Common myeloid progenitor, CD34-positive (primary cell): ENCODE measurements at regions of chr12 and their contacts with region 1.

Region 1: DNA sequence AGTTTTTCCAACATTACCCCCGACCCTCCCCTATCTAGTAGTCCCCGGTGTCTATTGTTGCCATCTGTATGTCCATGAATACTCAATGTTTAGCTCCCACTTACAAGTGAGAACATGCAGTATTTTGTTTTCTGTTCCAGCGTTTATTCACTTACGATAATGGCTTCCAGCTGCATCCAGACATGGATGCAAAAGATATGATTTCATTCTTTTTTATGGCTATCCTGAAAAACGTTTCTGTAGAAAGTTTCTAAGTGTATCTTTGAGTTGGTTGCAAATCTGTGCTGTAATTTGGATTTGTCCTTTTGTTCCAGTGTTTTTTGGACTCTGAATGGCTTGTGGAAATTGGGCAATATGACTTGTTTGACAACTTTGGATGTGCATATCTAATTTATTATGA is 11.8 kb downstream of the SP1 start:
- DNase-seq: no peak
- H3K4me3 ChIP-seq: no peak overlapping the region
- H3K27ac ChIP-seq: no peak overlapping the region
- H3K4me1 ChIP-seq: peaks cover 7 to 24% (median 16%) of the 10 kb centered on the region in 4 experiments
- H3K27me3 ChIP-seq: no peaks in the 10 kb centered on the region

Region 2: DNA sequence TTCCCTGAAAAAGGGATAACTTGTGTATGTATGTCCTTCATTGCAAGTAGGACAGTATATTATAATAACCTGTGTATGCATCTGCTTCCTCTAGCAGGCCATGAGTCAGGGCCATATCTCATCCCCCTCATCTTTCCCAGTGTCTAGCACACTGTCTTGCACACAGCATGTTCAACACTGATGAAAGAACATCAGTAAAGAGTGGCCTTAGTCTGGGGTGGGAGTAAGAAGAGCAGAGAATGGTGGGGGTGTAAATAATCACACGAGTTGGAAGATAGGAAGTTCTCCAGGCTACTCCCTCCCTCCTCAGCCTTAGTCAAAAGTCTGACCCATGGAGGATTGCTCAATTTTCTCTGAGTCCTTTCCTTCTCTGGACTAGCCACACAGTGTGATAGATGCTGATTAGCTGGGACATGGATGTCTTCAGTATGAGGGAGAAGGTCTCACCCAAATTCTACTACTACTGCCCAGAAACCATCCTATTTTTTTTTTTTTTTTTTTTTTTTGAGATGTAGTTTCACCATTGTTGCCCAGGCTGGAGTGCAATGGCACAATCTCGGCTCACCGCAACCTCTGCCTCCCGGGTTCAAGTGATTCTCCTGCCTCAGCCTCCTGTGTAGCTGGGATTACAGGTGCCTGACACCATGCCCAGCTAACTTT is 26.4 kb before region 1 on chr12:
- CTCF ChIA-PET with region 1: no interaction called
- POLR2A ChIA-PET with region 1: no interaction called
- DNase-seq: peak in 2 of 3 donors; percentile 35 to 53
- H3K4me3 ChIP-seq: no peak overlapping the region
- H3K27ac ChIP-seq: peak overlapping the region in 1 of 2 experiments; percentile 75
- H3K4me1 ChIP-seq: peaks cover 5 to 30% (median 26%) of the 10 kb centered on the region in 4 experiments
- H3K27me3 ChIP-seq: no peaks in the 10 kb centered on the region

Region 3: DNA sequence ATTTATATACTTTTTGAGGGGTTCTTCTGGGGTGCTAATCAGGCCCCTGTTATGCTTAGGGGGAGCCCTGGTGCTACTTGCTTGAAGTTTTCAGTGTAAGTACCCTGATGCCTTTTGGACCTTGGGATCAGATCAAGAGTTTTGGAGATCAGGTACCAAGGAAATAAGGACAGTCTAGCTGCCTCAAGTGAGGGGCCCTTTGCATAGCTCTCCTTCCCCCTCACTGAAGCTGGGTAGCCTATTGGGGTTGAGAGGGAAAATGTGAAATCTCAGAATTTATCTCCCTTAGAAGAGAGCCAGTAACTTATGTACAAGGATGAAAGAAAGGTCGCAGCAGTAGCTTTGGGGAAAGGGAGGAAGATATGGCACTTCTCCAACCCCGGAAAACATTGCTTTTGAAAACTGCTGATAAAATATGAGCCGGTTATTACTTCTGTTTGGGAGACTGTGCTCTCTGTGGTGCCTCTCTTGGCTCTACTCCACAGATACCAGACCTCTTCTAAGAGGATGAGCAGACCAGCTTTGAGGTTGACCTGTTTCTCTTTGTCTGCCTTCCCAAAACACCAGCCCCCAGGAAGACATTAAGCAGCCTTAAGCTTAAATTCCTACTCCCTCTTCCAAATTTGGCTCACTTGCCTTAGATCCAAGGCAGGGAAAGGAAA is 23.2 kb after region 1 on chr12:
- CTCF ChIA-PET with region 1: interaction called, 10 read pairs
- POLR2A ChIA-PET with region 1: no interaction called
- DNase-seq: no peak
- H3K4me3 ChIP-seq: no peak overlapping the region
- H3K27ac ChIP-seq: peak overlapping the region in 1 of 2 experiments; percentile 3
- H3K4me1 ChIP-seq: peaks cover 0 to 48% (median 31%) of the 10 kb centered on the region in 4 experiments
- H3K27me3 ChIP-seq: no peaks in the 10 kb centered on the region

Region 4: DNA sequence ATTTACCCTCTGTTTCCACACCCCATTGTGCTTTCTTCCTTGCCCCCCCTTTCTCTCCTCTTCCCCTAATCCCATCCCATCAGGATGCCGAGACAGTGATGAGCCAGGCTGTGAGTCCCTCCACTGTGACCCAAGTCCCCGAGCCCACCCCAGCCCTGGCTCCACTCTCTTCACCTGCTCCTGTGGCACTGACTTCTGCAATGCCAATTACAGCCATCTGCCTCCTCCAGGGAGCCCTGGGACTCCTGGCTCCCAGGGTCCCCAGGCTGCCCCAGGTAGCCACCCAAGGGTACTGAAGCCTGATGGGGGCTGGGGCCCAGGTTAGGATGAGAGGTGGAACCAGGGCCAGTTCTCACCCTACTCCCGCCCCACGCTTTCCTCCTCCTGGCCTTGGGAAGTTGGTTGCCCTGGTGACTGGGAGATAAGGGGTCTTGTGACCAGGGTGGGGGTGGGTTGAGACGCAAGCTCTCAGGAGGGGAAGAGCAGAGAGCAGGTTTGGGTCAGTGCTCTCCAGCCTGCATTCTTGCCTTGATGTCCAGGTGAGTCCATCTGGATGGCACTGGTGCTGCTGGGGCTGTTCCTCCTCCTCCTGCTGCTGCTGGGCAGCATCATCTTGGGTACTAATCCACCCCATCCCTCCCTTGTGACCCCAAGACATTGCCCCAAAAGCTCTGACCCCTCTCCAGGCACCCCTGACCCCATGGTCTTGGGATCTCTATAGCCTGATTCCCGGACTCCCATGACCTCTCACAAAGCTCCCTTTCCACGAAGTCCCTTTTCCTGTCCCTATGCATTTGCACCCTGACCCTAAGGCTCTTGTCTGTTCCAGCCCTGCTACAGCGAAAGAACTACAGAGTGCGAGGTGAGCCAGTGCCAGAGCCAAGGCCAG is 33.1 kb after region 1 on chr12:
- CTCF ChIA-PET with region 1: interaction called, 17 read pairs
- POLR2A ChIA-PET with region 1: no interaction called
- DNase-seq: peak in 1 of 3 donors; percentile 18
- H3K4me3 ChIP-seq: no peak overlapping the region
- H3K27ac ChIP-seq: peak overlapping the region in 1 of 2 experiments; percentile 60
- H3K4me1 ChIP-seq: peaks cover 0 to 12% (median 6%) of the 10 kb centered on the region in 4 experiments
- H3K27me3 ChIP-seq: no peaks in the 10 kb centered on the region

Region 5: GRCh38 chr12:53476769-53477209 is 85.1 kb after region 1 on chr12:
- CTCF ChIA-PET with region 1: no interaction called
- POLR2A ChIA-PET with region 1: no interaction called
- DNase-seq: peak in 2 of 3 donors; percentile 43 to 51
- H3K4me3 ChIP-seq: no peak overlapping the region
- H3K27ac ChIP-seq: no peak overlapping the region
- H3K4me1 ChIP-seq: no peaks in the 10 kb centered on the region
- H3K27me3 ChIP-seq: no peaks in the 10 kb centered on the region